Pancreas (tissue), 10 donors: ENCODE measurements at regions of chr19 and their contacts with region 1.

Region 1: DNA sequence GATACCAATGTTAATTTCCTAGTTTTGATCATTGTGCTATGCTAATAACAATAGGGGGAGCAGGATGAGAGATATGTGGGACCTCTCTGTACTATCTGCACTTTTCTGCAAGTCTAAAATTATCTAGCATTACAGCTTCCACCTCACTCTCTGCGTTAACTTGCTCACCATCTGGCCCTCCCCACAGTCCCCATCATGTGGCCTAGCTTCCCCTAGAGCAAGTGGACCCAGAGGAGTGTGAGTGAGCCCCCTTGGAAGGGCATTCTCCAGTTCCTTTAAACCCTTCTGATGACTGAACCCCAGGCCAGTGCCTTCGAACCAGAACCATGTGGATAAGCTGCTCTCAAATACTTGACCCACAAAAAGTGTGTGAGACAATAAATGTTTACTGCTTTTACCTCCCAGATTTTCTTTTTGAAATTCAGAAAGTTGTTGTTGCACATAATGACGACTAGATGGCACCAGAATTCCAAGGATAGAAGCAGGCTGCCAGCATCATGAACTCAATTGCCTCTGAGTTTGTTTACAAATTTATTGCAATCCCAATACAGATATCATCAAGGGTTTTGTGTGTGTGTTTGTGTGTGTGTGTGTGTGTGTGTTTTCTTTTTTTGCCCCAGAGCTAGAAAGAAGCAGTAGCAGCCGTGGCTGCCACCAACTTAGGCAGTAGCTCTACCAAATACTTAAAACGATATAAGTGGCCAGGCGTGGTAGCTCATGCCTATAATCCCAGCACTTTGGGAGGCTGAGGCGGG is 49.0 kb upstream of the ZNF780A start:
- DNase-seq: no peak
- ATAC-seq: peak; percentile 43 to 79 (median 73)
- H3K4me3 ChIP-seq: no peak overlapping the region
- H3K27ac ChIP-seq: no peak overlapping the region
- H3K4me1 ChIP-seq: no peaks in the 10 kb centered on the region
- H3K27me3 ChIP-seq: peaks cover 0 to 7% (median 0%) of the 10 kb centered on the region in 4 donors
- CTCF ChIP-seq: peak; percentile 23 to 62 (median 38)

Region 2: DNA sequence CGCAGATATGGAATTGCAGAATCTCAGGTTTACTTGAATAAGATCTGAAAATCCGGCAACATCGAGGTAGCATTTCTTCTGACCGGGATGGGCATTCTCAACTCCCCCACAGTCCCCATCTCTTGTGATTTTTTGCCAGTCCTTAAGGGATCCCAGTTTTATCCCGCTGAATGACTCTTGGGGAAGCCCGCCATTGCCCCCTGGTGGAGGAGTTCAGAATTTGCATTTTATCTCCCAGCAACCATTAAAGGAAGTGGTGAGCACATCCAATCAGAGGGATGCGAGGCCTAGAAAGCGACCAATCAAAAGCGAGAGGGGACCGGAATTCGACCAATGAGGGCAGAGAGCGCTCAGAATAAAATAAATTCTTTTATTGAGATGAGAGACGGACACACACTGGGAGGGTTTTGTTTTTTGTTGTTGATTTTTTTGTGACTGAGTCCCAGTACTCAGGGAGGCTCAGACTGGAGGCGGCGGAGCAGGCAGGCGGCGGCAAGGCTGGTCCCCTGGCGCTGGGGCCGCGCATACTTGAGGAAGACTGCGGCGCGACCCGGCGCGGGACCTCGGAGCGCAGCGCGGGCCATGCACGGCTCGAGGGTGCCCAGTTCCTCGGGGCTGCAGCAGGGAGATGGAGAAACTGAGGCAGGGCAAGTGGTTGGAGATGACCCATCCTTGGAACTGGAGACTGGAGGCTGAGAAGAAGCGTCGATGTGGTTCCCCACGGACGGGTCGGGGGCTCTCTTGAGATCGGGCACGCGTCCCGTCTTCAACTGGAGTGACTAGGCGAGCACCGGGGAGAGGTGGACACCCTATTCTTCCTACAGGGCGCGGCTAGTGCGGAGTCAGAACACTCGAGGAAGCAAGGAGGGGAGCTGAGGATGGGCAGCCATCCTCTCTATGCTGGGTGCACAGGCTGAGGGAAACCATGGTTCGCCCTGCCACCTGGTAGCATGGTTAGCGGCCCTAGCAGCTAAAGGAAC is 82.4 kb after region 1 on chr19:
- intact Hi-C with region 1: loop called in 1 of 3 experiments (anchors 5 kb)
- DNase-seq: peak in 5 of 6 donors; percentile 65 to 84 (median 72)
- ATAC-seq: peak; percentile 82 to 84 (median 83)
- H3K4me3 ChIP-seq: no peak overlapping the region
- H3K27ac ChIP-seq: no peak overlapping the region
- H3K4me1 ChIP-seq: peaks cover 0 to 10% (median 7%) of the 10 kb centered on the region in 3 donors
- H3K27me3 ChIP-seq: peaks cover 0 to 19% (median 4%) of the 10 kb centered on the region in 4 donors
- CTCF ChIP-seq: peak; percentile 71 to 81 (median 72)